CD4-positive, alpha-beta memory T cell (primary cell): ENCODE measurements at regions of chr2 and their contacts with region 1.

Region 1: GRCh38 chr2:84781942-84782716 is 98.8 kb downstream of the TRABD2A start:
- DNase-seq: peak; percentile 59 to 84 (median 71)
- H3K4me3 ChIP-seq: peak overlapping the region; percentile 6 to 23
- H3K4me3 Mint-ChIP-seq: peak overlapping the region; percentile 52 to 84 (median 74)
- H3K27ac ChIP-seq: peak overlapping the region; percentile 53
- H3K27ac Mint-ChIP-seq: peak overlapping the region; percentile 84 to 96 (median 93)
- H3K4me1 ChIP-seq: peaks cover 80% of the 10 kb centered on the region
- H3K4me1 Mint-ChIP-seq: peaks cover 80 to 93% (median 84%) of the 10 kb centered on the region in 4 donors
- H3K27me3 ChIP-seq: no peaks in the 10 kb centered on the region
- H3K27me3 Mint-ChIP-seq: no peaks in the 10 kb centered on the region

Region 2: DNA sequence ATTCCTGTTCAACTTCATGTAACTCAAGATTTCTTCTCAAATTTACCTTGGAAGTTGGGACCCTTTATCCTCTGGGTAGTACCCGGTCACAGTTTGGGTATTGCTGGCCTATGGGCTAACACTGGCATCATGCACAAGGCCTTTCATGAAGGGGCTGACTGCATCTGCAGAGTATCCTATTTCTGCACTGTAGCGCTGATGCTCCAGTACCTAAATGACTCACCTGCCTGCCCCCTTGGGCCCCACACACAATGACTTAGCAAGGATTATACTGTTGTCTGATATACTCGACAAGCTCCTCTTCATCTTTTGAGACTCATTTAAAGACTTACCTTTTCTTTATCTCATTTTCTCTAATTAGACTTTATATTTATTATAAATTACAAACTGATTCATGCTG is 225.9 kb before region 1 on chr2:
- CTCF ChIA-PET with region 1: no interaction called
- POLR2A ChIA-PET with region 1: no interaction called
- intact Hi-C with region 1: no loop called
- DNase-seq: no peak
- H3K4me3 ChIP-seq: no peak overlapping the region
- H3K4me3 Mint-ChIP-seq: no peak overlapping the region
- H3K27ac ChIP-seq: no peak overlapping the region
- H3K27ac Mint-ChIP-seq: no peak overlapping the region
- H3K4me1 ChIP-seq: no peaks in the 10 kb centered on the region
- H3K4me1 Mint-ChIP-seq: no peaks in the 10 kb centered on the region
- H3K27me3 ChIP-seq: no peaks in the 10 kb centered on the region
- H3K27me3 Mint-ChIP-seq: peaks cover 0 to 4% of the 10 kb centered on the region in 2 donors

Region 3: DNA sequence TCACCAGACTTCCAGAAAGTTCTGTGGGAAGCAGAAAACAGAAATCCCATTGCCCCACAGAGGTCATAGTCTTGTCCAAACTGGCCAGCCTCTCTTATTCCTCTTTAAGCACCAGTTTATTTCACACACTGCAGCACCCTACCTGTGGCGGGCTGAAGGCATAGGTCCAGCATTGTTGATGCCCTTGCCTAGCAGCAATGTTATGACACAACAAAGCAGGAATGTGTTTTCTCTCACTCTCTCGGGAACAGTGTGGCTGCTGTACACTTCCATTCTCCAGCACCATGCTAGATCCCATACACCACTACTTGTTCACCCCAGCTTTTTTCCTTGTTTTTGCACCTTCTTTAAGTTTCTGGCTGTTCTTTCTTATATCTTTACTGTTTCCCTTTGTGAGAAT is 84.2 kb before region 1 on chr2:
- CTCF ChIA-PET with region 1: no interaction called
- POLR2A ChIA-PET with region 1: interaction called, 8 read pairs
- intact Hi-C with region 1: loop called (anchors 2 kb)
- DNase-seq: no peak
- H3K4me3 ChIP-seq: no peak overlapping the region
- H3K4me3 Mint-ChIP-seq: no peak overlapping the region
- H3K27ac ChIP-seq: no peak overlapping the region
- H3K27ac Mint-ChIP-seq: peak overlapping the region in 1 of 7 donors; percentile 73
- H3K4me1 ChIP-seq: peaks cover 27% of the 10 kb centered on the region
- H3K4me1 Mint-ChIP-seq: peaks cover 20 to 28% (median 26%) of the 10 kb centered on the region in 4 donors
- H3K27me3 ChIP-seq: no peaks in the 10 kb centered on the region
- H3K27me3 Mint-ChIP-seq: no peaks in the 10 kb centered on the region

Region 4: GRCh38 chr2:84832772-84833461 is 50.8 kb after region 1 on chr2:
- CTCF ChIA-PET with region 1: interaction called, 3 read pairs
- POLR2A ChIA-PET with region 1: interaction called, 26 read pairs
- intact Hi-C with region 1: no loop called
- DNase-seq: peak in 2 of 5 donors; percentile 15 to 38
- H3K4me3 ChIP-seq: peak overlapping the region in 1 of 2 donors; percentile 39
- H3K4me3 Mint-ChIP-seq: peak overlapping the region; percentile 52 to 84 (median 78)
- H3K27ac ChIP-seq: peak overlapping the region; percentile 59
- H3K27ac Mint-ChIP-seq: peak overlapping the region in 4 of 7 donors; percentile 93 to 96 (median 94)
- H3K4me1 ChIP-seq: peaks cover 87% of the 10 kb centered on the region
- H3K4me1 Mint-ChIP-seq: peaks cover 27 to 49% (median 39%) of the 10 kb centered on the region in 4 donors
- H3K27me3 ChIP-seq: no peaks in the 10 kb centered on the region
- H3K27me3 Mint-ChIP-seq: no peaks in the 10 kb centered on the region

Region 5: GRCh38 chr2:84846041-84846663 is 64.0 kb after region 1 on chr2:
- CTCF ChIA-PET with region 1: interaction called, 9 read pairs
- POLR2A ChIA-PET with region 1: interaction called, 121 read pairs
- intact Hi-C with region 1: loop called (anchors 1 kb)
- DNase-seq: peak; percentile 67 to 84 (median 78)
- H3K4me3 ChIP-seq: peak overlapping the region; percentile 11 to 15
- H3K4me3 Mint-ChIP-seq: peak overlapping the region; percentile 31 to 84 (median 74)
- H3K27ac ChIP-seq: peak overlapping the region; percentile 61
- H3K27ac Mint-ChIP-seq: peak overlapping the region; percentile 92 to 99 (median 97)
- H3K4me1 ChIP-seq: peaks cover 99% of the 10 kb centered on the region
- H3K4me1 Mint-ChIP-seq: peaks cover 81 to 98% (median 90%) of the 10 kb centered on the region in 4 donors
- H3K27me3 ChIP-seq: no peaks in the 10 kb centered on the region
- H3K27me3 Mint-ChIP-seq: no peaks in the 10 kb centered on the region

Region 6: GRCh38 chr2:84970868-84971509 is 188.9 kb after region 1 on chr2 and contains the start of gene KCMF1:
- CTCF ChIA-PET with region 1: no interaction called
- POLR2A ChIA-PET with region 1: interaction called, 6 read pairs
- intact Hi-C with region 1: loop called (anchors 2 kb)
- DNase-seq: peak; percentile 64 to 79 (median 71)
- H3K4me3 ChIP-seq: peak within 1 kb of the TSS; percentile 63 to 90
- H3K4me3 Mint-ChIP-seq: peak within 1 kb of the TSS; percentile 93 to 100 (median 99)
- H3K27ac ChIP-seq: peak within 1 kb of the TSS; percentile 93
- H3K27ac Mint-ChIP-seq: peak within 1 kb of the TSS; percentile 97 to 100 (median 99)
- H3K4me1 ChIP-seq: peaks cover 59% of the 10 kb centered on the region
- H3K4me1 Mint-ChIP-seq: peaks cover 41 to 73% (median 56%) of the 10 kb centered on the region in 4 donors
- H3K27me3 ChIP-seq: no peaks in the 10 kb centered on the region
- H3K27me3 Mint-ChIP-seq: peaks cover 0 to 2% of the 10 kb centered on the region in 2 donors
- total RNA-seq, gene KCMF1: 59.8 to 62.7 TPM